ENCODE measurements at regions of chr1 and their contacts with region 1.

Region 1: DNA sequence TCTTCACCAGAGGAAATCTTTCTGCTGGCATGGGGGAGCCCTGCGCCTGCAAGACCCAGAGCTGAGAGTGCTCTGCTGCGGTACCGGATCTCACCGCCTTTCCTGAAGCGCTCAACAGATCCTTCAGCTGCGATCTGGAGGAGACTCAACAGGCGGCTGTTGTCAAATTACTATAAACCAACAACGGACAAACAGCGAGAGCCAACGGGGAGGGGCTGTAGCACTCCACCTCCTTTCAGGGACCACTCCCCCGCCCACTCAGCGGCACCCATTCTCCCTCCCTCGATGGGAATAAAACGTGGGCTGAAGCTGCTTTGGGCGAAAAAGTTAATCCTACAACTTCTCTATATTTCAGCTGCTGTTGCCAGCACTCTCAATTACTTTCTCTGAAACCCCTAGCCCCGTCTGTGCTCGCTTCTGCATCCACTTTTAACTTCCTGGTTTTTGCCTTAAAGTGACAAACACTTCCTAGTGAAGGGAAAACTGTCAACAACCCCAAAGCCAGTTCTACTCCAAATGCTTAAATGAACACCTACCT is at the start of gene FMO5:
- DNase-seq: peak; percentile 43
- ATAC-seq: peak; percentile 89
- H3K4me3 Mint-ChIP-seq: peak within 1 kb of the TSS; percentile 88
- H3K27ac Mint-ChIP-seq: peak within 1 kb of the TSS; percentile 85
- H3K4me1 Mint-ChIP-seq: peaks cover 18% of the 10 kb centered on the region
- H3K27me3 Mint-ChIP-seq: no peaks in the 10 kb centered on the region
- CTCF ChIP-seq: no peak
- total RNA-seq, gene FMO5: 1.5 and 1.8 TPM in 2 replicates

Region 2: GRCh38 chr1:147099192-147099591 is 126.1 kb before region 1 on chr1:
- CTCF ChIA-PET with region 1: no interaction called
- POLR2A ChIA-PET with region 1: no interaction called
- intact Hi-C with region 1: no loop called
- DNase-seq: no peak
- ATAC-seq: no peak
- H3K4me3 Mint-ChIP-seq: no peak overlapping the region
- H3K27ac Mint-ChIP-seq: no peak overlapping the region
- H3K4me1 Mint-ChIP-seq: peaks cover 5% of the 10 kb centered on the region
- H3K27me3 Mint-ChIP-seq: peaks cover 3% of the 10 kb centered on the region
- CTCF ChIP-seq: no peak

Region 3: DNA sequence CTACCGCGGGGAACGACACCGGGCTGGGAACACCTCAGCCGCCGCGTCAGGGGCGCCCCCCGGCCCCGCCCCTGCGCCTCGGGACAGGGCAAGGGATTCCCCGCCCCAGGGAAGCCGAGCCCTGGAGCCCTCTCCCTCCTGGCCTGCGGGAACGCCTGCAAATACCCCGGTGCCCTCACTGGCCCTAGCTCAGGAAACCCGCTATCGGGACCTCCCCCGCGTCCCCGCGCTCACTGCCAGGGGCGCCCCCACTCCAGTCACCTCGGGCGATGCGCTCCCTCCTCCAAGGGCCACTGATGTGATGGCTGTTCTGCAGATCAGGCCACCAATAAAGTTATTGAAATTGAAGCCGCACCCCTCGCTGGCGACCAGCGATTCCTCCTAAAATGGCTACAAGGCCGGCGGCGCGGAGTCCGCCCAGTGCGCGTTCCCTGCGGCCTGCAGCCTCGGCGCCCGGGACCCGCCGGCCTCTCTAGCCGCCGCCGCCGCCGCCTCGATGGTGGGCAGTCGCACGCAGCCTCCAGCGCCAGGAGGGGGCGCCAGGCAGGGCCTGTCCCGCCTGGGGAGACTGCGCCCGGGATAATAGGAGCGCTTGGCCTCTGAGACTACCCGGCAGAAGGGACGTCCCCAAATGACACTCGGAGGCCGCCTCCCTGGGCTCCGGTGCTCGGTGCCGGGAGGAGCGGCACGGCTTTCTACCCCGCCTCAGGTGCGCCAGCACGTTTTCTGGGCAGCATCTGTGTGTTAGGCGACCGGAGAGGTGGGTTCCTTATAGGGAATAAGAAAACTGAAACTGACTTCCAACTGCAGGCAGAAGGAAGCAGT is 52.9 kb before region 1 on chr1 and contains the start of gene PRKAB2:
- CTCF ChIA-PET with region 1: interaction called, 3 read pairs
- POLR2A ChIA-PET with region 1: interaction called, 10 read pairs
- intact Hi-C with region 1: loop called (anchors 5 kb)
- DNase-seq: peak; percentile 96
- ATAC-seq: peak; percentile 88
- H3K4me3 Mint-ChIP-seq: peak within 1 kb of the TSS; percentile 99
- H3K27ac Mint-ChIP-seq: peak within 1 kb of the TSS; percentile 98
- H3K4me1 Mint-ChIP-seq: peaks cover 32% of the 10 kb centered on the region
- H3K27me3 Mint-ChIP-seq: no peaks in the 10 kb centered on the region
- CTCF ChIP-seq: peak; percentile 83
- total RNA-seq, gene PRKAB2: 9.8 and 10.5 TPM in 2 replicates

Region 4: GRCh38 chr1:147177611-147178380 is 47.5 kb before region 1 on chr1:
- CTCF ChIA-PET with region 1: interaction called, 3 read pairs
- POLR2A ChIA-PET with region 1: interaction called, 10 read pairs
- intact Hi-C with region 1: loop called (anchors 5 kb)
- DNase-seq: no peak
- ATAC-seq: no peak
- H3K4me3 Mint-ChIP-seq: peak overlapping the region; percentile 54
- H3K27ac Mint-ChIP-seq: no peak overlapping the region
- H3K4me1 Mint-ChIP-seq: peaks cover 21% of the 10 kb centered on the region
- H3K27me3 Mint-ChIP-seq: no peaks in the 10 kb centered on the region
- CTCF ChIP-seq: no peak

Region 5: GRCh38 chr1:147522806-147523205 is 297.5 kb after region 1 on chr1:
- CTCF ChIA-PET with region 1: no interaction called
- POLR2A ChIA-PET with region 1: no interaction called
- intact Hi-C with region 1: no loop called
- DNase-seq: no peak
- ATAC-seq: no peak
- H3K4me3 Mint-ChIP-seq: no peak overlapping the region
- H3K27ac Mint-ChIP-seq: no peak overlapping the region
- H3K4me1 Mint-ChIP-seq: no peaks in the 10 kb centered on the region
- H3K27me3 Mint-ChIP-seq: peaks cover 21% of the 10 kb centered on the region
- CTCF ChIP-seq: no peak